Activated CD4-positive, alpha-beta T cell treated with anti-CD3 and anti-CD28 coated beads, Interleukin-2, amount 10 ng/mL, durations not matched to agents 24 days and 14 days (primary cell): ENCODE measurements at regions of chr9 and their contacts with region 1.

Region 1: DNA sequence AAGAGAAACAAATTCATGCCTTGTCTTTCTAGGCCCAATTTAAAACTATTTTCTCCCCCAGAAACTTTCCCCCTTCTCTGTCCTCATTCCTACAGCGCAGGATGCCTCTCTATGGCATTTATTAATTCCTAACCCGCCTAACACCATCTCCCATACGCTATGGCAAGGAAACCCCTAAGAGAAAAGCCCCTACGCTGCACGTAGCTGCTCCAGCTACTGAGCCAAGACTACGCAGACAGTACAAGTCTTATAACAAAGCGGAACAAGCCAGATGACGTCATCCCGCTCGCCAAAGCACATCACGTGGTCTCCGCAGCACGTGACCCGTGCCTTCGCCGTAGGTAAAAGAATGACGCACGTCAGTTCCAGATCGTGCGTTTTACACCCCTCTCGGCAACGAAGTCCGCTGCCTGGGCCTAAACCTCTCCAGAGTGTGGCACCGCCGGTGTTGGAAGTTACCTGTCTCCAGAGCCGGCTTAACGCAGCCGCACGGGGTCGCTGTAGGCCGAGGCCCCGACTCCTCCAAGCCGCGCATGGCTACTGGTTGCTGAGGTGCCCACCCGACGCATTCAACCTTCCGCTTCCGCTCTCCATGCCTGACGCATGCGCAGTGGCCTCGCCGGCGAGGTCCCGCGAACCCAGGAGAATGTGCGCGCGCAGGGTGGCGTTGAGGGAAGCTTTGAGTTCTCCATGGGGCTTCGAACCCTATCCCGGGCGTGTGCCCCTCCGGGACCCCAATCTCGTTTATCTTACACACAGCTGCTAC is at the start of gene TRMO:
- DNase-seq: peak; percentile 99
- H3K4me3 Mint-ChIP-seq: peak within 1 kb of the TSS; percentile 93
- H3K27ac Mint-ChIP-seq: peak within 1 kb of the TSS; percentile 98
- H3K4me1 Mint-ChIP-seq: peaks cover 47% of the 10 kb centered on the region
- H3K27me3 Mint-ChIP-seq: peaks cover 2% of the 10 kb centered on the region
- total RNA-seq, gene TRMO: 9.8 and 13.0 TPM in 2 replicates

Region 2: GRCh38 chr9:97575673-97576200 is 346.4 kb before region 1 on chr9:
- intact Hi-C with region 1: no loop called
- DNase-seq: no peak
- H3K4me3 Mint-ChIP-seq: peak overlapping the region; percentile 4
- H3K27ac Mint-ChIP-seq: no peak overlapping the region
- H3K4me1 Mint-ChIP-seq: peaks cover 6% of the 10 kb centered on the region
- H3K27me3 Mint-ChIP-seq: no peaks in the 10 kb centered on the region

Region 3: DNA sequence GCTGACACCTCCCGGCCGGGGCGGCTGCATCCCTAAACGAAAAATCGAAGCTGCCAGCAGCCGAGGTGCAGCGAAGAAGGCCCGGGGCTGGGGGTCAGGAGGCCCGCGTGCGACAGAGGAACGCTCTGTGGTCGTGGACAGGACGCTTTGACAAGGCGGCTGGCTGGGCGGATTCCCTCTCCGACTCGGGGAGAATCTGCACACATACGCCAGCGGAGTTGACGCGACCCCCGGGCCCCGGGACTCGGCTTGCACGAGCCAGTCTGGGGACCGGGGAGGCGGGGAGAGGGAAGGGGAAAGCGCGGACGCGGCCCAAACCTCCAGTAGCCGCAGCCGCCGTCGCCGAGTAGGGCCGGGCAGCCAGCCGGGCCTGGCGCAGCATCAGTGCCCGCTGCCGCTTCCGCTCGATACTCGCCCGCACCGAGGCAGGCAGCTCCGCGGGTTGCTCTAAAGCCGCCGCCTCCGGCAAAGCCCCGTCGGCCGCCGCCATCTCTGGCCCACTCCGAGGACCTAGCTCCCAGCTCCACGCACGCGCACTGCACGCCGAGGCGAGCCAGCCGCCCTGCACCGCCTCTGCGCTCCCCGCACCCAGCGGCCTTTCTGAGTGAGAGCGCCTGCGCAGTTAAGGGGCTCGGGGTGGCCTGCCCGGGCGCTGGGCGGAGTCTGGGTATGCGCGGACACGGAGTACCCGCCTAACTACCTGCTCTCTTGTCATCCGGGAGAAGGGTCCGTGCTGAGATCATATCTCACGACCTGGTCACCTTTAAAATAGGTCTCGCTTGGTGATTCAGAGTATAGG is 225.1 kb before region 1 on chr9 and contains the start of gene XPA:
- intact Hi-C with region 1: loop called (anchors 5 kb)
- DNase-seq: peak; percentile 99
- H3K4me3 Mint-ChIP-seq: peak within 1 kb of the TSS; percentile 91
- H3K27ac Mint-ChIP-seq: peak within 1 kb of the TSS; percentile 89
- H3K4me1 Mint-ChIP-seq: peaks cover 47% of the 10 kb centered on the region
- H3K27me3 Mint-ChIP-seq: no peaks in the 10 kb centered on the region
- total RNA-seq, gene XPA: 8.9 and 12.0 TPM in 2 replicates

Region 4: DNA sequence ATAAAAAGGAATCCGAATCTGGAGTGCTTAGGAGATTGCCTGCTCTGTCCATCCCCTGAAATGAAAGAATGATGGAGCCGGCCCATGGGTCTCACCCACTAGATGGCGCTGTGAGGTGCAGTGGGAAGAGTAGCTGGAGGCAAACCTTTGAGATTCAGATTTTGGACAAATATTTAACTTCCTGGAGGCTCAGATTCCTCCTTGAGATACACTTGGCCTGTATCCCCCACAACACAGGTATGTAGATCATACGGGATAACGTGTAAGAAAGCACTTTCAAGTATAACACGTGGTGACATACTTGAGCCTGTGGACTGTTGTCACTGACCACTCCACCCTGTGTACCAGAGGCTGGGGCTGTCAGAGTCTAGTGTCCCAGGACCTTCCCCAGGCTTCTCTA is 32.1 kb before region 1 on chr9:
- intact Hi-C with region 1: no loop called
- DNase-seq: peak; percentile 91
- H3K4me3 Mint-ChIP-seq: no peak overlapping the region
- H3K27ac Mint-ChIP-seq: no peak overlapping the region
- H3K4me1 Mint-ChIP-seq: peaks cover 6% of the 10 kb centered on the region
- H3K27me3 Mint-ChIP-seq: peaks cover 3% of the 10 kb centered on the region

Region 5: DNA sequence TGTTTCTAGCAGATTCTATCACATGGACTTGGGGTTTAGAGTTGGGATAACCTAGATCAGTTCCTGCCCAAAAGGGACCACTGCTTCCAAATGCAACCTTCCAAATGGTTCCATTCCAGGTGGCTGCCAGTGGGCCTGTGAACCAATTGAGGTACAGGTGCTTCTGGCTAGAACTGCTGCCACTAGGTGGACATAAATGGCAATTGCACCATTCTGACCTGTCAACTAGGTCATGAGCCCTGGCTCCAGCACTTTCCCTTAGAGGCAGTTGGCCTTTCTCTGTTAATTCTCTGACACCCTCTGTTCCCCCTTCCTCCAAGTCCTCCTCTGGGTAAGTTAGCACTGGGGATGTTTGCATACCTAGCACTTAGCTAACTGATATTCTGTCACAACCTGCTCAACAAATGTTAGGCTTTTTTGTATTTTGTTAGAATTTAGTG is 32.4 kb after region 1 on chr9:
- intact Hi-C with region 1: loop called (anchors 1 kb)
- DNase-seq: peak; percentile 87
- H3K4me3 Mint-ChIP-seq: no peak overlapping the region
- H3K27ac Mint-ChIP-seq: no peak overlapping the region
- H3K4me1 Mint-ChIP-seq: peaks cover 10% of the 10 kb centered on the region
- H3K27me3 Mint-ChIP-seq: peaks cover 8% of the 10 kb centered on the region

Region 6: GRCh38 chr9:98045234-98046179 is 123.4 kb after region 1 on chr9:
- intact Hi-C with region 1: loop called (anchors 1 kb)
- DNase-seq: peak; percentile 87
- H3K4me3 Mint-ChIP-seq: peak overlapping the region; percentile 87
- H3K27ac Mint-ChIP-seq: peak overlapping the region; percentile 86
- H3K4me1 Mint-ChIP-seq: peaks cover 28% of the 10 kb centered on the region
- H3K27me3 Mint-ChIP-seq: no peaks in the 10 kb centered on the region

Region 7: GRCh38 chr9:98118640-98119601 is 196.8 kb after region 1 on chr9 and contains the start of gene TRIM14:
- intact Hi-C with region 1: loop called (anchors 2 kb)
- DNase-seq: peak; percentile 93
- H3K4me3 Mint-ChIP-seq: peak within 1 kb of the TSS; percentile 87
- H3K27ac Mint-ChIP-seq: peak within 1 kb of the TSS; percentile 89
- H3K4me1 Mint-ChIP-seq: peaks cover 36% of the 10 kb centered on the region
- H3K27me3 Mint-ChIP-seq: no peaks in the 10 kb centered on the region
- total RNA-seq, gene TRIM14: 47.3 and 47.8 TPM in 2 replicates